SK-N-SH (cell line): ENCODE measurements at regions of chr3 and their contacts with region 1.

Region 1: DNA sequence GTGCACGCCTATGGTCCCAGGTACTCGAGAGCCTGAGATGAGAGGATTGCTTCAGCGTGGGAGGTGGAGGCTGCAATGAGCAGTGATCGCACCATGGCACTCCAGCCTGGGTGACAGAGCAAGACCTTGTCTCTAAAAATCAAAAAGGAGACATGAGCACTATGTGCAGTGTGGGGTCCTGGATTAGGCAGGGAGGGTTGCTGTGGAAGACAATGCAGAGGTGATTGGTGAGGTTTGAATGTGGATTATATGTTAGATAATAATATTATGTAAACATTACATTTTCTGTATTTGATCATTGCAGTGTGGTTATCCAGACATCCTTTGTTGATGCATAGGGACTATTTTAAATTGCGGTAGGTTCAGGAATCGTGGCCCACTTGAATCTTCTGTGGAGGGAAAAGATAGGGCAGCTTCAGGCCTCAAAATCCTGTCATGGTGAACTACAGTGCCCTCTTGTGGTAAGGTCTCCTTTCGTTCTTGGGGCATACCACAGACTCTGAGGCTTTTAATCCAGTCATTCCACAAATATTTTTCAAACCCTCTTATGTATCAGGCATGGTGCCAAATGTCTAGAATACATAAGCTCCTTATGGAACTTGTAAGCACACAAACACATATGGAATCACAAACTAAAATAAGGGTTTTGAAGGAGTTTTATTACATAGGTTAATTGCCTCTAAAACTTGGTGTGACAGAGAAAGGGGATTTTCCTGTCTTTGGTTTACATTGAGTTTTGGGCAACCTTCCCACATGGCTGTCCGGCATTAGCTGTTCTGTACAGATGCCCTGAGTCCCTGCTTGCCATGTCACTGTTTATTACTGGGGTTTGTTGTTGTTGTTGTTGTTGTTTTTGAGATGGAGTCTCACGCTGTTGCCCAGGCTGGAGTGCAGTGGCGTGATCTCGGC is 37.7 kb downstream of the GPD1L start:
- DNase-seq: peak; percentile 66
- H3K4me3 ChIP-seq: no peak overlapping the region
- H3K27ac ChIP-seq: no peak overlapping the region
- H3K4me1 ChIP-seq: no peaks in the 10 kb centered on the region
- H3K27me3 ChIP-seq: no peaks in the 10 kb centered on the region
- CTCF ChIP-seq: peak; percentile 81
- EP300 ChIP-seq: peak in 1 of 2 experiments; percentile 17; a peak in 1 of 4 replicates
- RAD21 ChIP-seq: peak; percentile 85

Region 2: DNA sequence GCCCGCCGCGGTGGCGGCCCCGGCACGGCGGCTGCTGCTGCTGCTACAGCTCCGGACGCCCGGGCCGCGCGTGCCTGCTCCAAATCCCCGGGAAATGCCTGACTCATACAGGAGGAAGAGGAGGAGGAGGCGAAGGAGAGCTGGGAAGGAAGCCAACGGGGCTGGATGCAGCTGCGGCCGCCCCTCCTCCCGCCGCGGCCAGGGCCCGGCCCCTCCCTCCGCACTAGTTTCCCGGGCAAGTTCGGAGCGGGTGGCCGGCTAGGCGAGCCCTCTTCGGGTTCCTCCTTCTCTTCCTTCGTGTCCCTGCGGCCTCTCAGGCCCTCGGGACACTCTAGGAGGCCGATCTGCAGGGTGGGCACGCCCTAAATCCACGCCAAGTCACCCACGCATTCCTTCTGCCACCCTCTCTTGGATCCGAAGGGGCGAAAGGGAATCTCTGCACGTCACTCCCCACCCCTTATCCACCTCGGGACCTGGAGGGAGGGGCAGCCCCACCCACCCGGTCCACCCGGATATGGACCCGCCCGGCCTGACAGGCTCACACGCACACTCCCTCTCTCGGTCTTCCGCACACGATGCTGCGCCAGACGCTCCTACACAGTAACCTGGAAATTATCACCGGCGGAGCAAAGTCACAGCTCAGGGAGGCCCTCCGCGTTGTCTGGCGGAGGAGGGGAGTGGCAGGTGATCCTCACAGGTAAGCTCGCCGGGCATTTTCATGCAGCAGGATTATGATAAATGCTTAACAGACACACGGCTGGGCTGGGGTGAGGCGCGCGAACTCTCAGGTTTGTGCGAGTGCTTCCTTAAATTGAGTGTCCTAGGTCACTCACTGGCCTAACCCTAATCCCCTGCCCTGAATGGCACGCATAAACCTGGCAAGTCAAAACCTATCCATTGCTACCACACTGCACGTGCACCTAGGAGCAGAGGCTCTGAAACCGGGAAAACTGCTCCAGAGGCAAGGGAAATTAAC is 162.6 kb before region 1 on chr3 and contains the starts of genes OSBPL10 and ZNF860:
- CTCF ChIA-PET with region 1: no interaction called
- POLR2A ChIA-PET with region 1: no interaction called
- DNase-seq: peak; percentile 74
- H3K4me3 ChIP-seq: peak within 1 kb of the TSS; percentile 55 to 61
- H3K27ac ChIP-seq: no peak within 1 kb of the TSS
- H3K4me1 ChIP-seq: peaks cover 5 to 11% of the 10 kb centered on the region in 2 experiments; a peak in 2 of 4 replicates
- H3K27me3 ChIP-seq: peaks cover 9% of the 10 kb centered on the region; the same call in 1 of the 2 replicates
- CTCF ChIP-seq: no peak
- EP300 ChIP-seq: no peak
- RAD21 ChIP-seq: no peak
- polyA plus RNA-seq, gene OSBPL10: 0.05 and 0.12 TPM in 2 replicates
- polyA plus RNA-seq, gene ZNF860: not detected in 2 replicates

Region 3: DNA sequence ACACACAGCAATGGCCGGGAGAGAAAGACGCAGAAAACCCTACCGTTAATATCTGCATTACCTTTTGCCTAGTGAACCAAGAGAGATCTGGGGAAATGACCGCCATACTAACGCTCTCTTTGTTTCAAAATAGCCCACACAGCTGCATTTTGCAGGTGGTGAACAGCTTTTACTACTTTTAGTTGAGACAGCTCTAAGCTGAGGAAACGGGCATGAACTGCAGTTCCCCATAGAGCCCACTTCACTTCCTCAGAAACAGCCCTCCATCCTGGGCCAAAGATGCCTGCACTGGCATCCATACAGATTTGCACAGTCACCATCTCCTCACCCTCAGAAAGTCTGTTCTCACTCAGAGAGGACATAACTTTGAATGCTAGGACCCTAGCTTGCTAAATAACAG is 117.5 kb before region 1 on chr3:
- CTCF ChIA-PET with region 1: interaction called, 18 read pairs
- POLR2A ChIA-PET with region 1: no interaction called
- DNase-seq: no peak
- H3K4me3 ChIP-seq: no peak overlapping the region
- H3K27ac ChIP-seq: no peak overlapping the region
- H3K4me1 ChIP-seq: no peaks in the 10 kb centered on the region
- H3K27me3 ChIP-seq: no peaks in the 10 kb centered on the region
- CTCF ChIP-seq: no peak
- EP300 ChIP-seq: no peak
- RAD21 ChIP-seq: no peak

Region 4: GRCh38 chr3:32128936-32129335 is 15.2 kb before region 1 on chr3:
- CTCF ChIA-PET with region 1: interaction called, 21 read pairs
- POLR2A ChIA-PET with region 1: no interaction called
- DNase-seq: no peak
- H3K4me3 ChIP-seq: no peak overlapping the region
- H3K27ac ChIP-seq: no peak overlapping the region
- H3K4me1 ChIP-seq: no peaks in the 10 kb centered on the region; a peak in 1 of 4 replicates
- H3K27me3 ChIP-seq: no peaks in the 10 kb centered on the region
- CTCF ChIP-seq: no peak
- EP300 ChIP-seq: no peak
- RAD21 ChIP-seq: no peak

Region 5: DNA sequence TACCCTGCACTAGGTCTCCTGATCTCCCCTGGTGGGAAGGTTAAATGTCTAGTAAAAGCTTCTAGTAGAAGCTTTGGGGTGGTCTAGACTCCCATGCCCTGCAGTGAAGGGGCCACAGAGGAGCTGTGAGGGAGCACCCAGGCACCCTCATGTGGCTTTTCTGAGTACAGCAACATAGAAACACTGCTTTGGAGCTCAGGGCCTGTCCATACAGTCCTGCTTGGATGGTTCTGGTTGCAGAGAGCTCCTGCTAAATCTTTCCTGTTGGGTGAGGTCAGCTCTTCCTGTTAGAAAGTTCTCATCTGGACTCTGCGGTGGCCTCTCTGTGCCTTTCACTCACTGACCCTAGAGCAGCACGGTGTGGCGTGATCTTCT is 10.1 kb after region 1 on chr3:
- CTCF ChIA-PET with region 1: interaction called, 18 read pairs
- POLR2A ChIA-PET with region 1: no interaction called
- DNase-seq: no peak
- H3K4me3 ChIP-seq: no peak overlapping the region
- H3K27ac ChIP-seq: no peak overlapping the region
- H3K4me1 ChIP-seq: no peaks in the 10 kb centered on the region
- H3K27me3 ChIP-seq: no peaks in the 10 kb centered on the region
- CTCF ChIP-seq: peak; percentile 14; the same call in 1 of the 2 replicates
- EP300 ChIP-seq: no peak
- RAD21 ChIP-seq: no peak